ENCODE measurements at regions of chr19 and their contacts with region 1.

Region 1: DNA sequence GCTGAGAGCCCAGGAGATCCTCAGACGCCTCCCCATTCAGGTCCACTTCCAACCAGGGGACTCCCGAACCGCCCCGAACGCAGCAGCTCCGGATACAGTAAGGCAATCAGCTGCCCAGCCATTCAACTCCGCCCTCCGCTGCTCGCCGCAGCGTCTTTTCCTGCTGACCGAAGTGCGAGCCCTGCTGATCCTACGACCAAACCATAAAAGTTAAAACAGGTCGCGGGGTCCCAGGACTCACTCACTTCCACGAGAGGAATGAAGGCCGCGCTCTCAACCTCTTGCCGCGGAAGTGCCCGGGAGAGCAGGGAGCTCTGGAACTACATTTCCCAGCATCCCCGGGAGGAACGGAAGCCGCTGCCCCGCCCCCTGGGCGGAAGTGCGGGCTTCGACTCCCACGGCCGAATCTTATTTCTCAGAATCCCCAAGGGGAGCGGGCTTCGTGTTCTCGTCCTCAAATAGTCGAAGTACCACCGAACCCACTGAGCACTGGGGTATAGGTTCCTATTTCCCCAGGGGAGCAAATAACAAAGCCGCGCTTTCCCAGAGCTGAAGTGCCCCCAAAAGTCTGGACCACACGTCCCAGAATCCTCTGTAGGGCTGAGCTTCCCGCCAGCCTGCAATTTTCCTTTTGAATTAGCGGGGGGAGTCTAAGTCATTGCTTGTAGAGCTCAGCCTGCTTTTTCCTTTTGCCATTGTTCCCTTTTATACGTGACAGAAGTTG is at the start of gene ZNF45:
- DNase-seq: peak; percentile 93
- H3K4me3 Mint-ChIP-seq: peak within 1 kb of the TSS; percentile 92
- H3K27ac Mint-ChIP-seq: peak within 1 kb of the TSS; percentile 78
- H3K4me1 Mint-ChIP-seq: peaks cover 19% of the 10 kb centered on the region
- H3K27me3 Mint-ChIP-seq: no peaks in the 10 kb centered on the region
- CTCF ChIP-seq: no peak
- total RNA-seq, gene ZNF45: 14.9 and 20.3 TPM in 2 replicates

Region 2: GRCh38 chr19:43826787-43827754 is 108.1 kb before region 1 on chr19 and contains the start of gene ZNF283:
- CTCF ChIA-PET with region 1: interaction called, 4 read pairs
- intact Hi-C with region 1: loop called (anchors 10 kb)
- DNase-seq: peak; percentile 95
- H3K4me3 Mint-ChIP-seq: peak within 1 kb of the TSS; percentile 92
- H3K27ac Mint-ChIP-seq: peak within 1 kb of the TSS; percentile 70
- H3K4me1 Mint-ChIP-seq: peaks cover 20% of the 10 kb centered on the region
- H3K27me3 Mint-ChIP-seq: no peaks in the 10 kb centered on the region
- CTCF ChIP-seq: no peak
- total RNA-seq, gene ZNF283: 12.9 and 13.9 TPM in 2 replicates

Region 3: DNA sequence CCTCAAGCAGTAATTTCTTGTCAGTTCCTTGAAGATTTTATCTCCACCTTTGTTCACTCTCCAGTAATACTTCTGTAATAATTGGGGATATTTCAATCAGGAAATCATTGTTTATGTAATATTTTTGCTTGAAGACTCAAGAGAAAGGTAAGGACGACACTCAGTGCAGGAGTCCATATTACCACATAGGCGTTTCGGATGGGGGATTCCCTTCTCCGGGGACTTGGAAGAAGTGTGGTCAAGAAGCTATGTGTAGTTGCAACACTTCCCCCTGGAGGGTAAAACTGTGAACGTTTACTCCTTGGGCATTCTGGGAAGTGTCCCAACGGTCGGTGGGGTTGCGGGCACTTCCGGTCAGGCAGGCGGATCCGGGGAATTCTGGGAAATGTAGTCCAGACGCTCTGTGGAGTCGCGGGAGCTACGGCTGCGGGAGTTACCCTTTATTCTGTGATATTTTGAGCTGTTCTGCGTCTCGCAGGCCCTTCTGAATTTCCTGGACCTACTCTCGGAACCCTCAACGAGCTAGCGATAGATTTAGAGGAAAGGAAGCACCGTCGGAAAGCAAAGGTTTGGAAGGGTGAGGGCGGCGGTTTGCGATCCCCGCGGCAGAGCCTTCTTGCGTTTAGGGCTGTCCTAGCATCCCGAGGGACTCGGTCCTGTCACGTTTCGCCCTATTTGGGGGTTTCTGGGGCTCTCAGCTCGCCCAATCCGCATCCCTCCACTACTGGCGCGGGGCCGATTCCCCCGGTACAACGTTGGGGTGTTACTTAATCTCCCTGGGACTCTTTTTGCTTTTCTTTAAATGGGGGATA is 15.9 kb after region 1 on chr19 and contains the start of gene ZNF221:
- CTCF ChIA-PET with region 1: interaction called, 9 read pairs
- intact Hi-C with region 1: loop called (anchors 2 kb)
- DNase-seq: peak; percentile 94
- H3K4me3 Mint-ChIP-seq: peak within 1 kb of the TSS; percentile 97
- H3K27ac Mint-ChIP-seq: peak within 1 kb of the TSS; percentile 76
- H3K4me1 Mint-ChIP-seq: peaks cover 9% of the 10 kb centered on the region
- H3K27me3 Mint-ChIP-seq: peaks cover 21% of the 10 kb centered on the region
- CTCF ChIP-seq: peak; percentile 45
- total RNA-seq, gene ZNF221: 6.3 and 8.3 TPM in 2 replicates

Measured in Calu3 (cell line).